HAP-1 (cell line): ENCODE measurements at regions of chr1 and their contacts with region 1.

Region 1: GRCh38 chr1:118987468-118988185 is 516 bp downstream of the TBX15 start:
- DNase-seq: no peak
- H3K4me3 ChIP-seq: no peak overlapping the region
- H3K4me1 ChIP-seq: no peaks in the 10 kb centered on the region
- H3K27me3 ChIP-seq: no peaks in the 10 kb centered on the region

Region 2: DNA sequence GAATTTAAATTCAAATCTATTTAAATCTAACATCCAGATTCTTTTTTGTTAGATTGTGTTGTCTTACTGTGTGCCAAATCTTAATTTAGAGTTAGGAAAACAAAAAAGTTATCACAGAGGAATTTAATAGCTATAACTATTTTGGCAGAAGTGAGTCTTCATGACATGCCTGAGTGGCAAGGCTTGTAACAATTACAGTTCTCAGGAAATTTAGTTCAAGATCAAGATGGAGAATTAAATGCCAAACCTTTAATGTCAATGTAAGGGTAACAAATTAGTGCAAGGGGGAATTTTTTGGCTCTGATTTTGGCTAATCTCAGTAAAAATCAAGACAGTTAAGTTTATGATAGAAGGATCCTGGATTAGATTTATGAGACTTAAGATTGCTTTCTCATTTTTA is 1116.6 kb before region 1 on chr1:
- in situ Hi-C with region 1: loop called (anchors 10 kb)
- DNase-seq: no peak
- H3K4me3 ChIP-seq: no peak overlapping the region
- H3K4me1 ChIP-seq: no peaks in the 10 kb centered on the region
- H3K27me3 ChIP-seq: no peaks in the 10 kb centered on the region

Region 3: DNA sequence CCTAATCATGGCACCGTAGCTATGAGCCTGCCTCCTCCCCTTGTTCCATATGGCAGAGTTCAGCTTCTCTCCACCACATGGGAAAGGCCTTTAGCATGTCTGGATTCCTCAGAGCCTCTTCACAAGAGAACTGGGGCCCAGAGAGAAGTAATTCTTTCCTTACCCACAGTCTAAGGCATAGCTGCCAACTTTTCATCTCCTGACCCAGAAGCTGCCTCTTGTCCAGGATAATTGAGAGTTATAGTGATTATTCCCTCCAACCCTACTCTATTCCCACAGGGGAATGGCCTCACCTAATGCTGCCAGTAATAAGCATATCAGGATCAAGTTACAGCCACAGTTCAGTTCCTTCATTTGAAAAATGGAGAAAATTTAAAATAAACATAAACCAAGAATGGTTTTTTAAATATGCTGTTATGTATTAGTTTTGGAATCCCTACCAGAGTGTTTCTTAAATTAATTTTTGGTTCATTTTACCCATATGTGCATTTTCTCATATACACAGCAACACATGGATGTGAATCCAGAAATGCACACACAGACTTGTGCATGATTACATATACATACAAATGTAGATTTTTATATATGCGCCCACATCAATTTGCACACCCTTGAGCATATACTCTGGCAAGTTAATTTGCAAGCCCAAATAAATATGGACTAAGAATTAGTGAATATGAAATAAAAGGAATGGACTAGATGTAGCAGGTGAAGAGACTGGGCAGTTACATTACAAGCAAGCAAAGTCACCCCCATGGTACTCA is 216.8 kb after region 1 on chr1:
- in situ Hi-C with region 1: no loop called
- DNase-seq: no peak
- H3K4me3 ChIP-seq: no peak overlapping the region
- H3K4me1 ChIP-seq: no peaks in the 10 kb centered on the region
- H3K27me3 ChIP-seq: no peaks in the 10 kb centered on the region

Region 4: GRCh38 chr1:119266386-119266785 is 278.8 kb after region 1 on chr1:
- in situ Hi-C with region 1: no loop called
- DNase-seq: no peak
- H3K4me3 ChIP-seq: no peak overlapping the region
- H3K4me1 ChIP-seq: no peaks in the 10 kb centered on the region
- H3K27me3 ChIP-seq: no peaks in the 10 kb centered on the region